Activated T-helper 1 cell treated with anti-CD3 and anti-CD28 coated beads, Interleukin-12 subunit alpha, Interleukin-12 subunit beta, Interleukin-2, Interleukin-4 antibody, amounts not matched to agents 30 ng/mL and 10 ng/mL and 1 ng/mL, durations not matched to agents 14 hours and 24 hours and 36 hours (primary cell): ENCODE measurements at regions of chr16 and their contacts with region 1.

Region 1: DNA sequence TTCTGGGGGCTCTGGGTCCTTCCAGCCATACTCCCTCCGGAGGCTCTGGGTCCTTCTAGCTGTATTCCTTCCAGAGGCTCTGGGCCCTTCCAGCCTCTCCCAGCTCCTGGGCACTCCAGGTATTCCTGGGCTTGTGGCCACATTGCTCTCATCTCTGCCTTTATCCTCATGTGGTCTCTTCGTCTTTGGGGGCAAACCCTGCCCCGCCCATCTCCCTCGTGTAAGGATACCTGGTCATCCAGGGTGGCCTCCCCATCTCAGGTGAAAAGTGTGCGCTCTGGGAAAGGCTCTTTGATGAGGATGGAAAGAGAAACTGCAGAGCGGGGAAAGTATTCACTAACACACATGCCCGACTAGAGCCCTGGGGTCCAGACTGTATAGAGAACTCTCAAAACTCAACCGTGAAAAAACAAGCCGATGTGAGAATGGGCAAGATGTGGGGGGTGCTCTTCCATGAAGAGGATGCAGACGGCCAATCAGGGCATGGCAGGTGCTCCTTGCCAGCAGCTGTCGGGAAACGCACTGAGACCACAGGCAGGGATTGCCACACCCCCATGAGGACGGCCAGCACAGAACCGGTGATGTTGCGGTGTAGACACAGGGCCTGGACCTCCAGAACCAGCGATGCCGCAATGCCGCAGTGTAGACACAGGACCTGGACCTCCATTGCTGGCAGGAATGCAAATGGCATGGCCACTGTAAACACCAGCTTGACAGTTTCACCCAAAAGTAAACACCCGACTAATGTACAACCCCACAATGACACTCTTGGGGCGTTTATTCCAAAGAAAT is 164.7 kb downstream of the BANP start:
- DNase-seq: no peak
- H3K4me3 Mint-ChIP-seq: no peak overlapping the region
- H3K27ac Mint-ChIP-seq: no peak overlapping the region
- H3K4me1 Mint-ChIP-seq: no peaks in the 10 kb centered on the region
- H3K27me3 Mint-ChIP-seq: peaks cover 4% of the 10 kb centered on the region

Region 2: GRCh38 chr16:88102597-88102996 is 13.3 kb before region 1 on chr16:
- intact Hi-C with region 1: loop called (anchors 1 kb)
- DNase-seq: no peak
- H3K4me3 Mint-ChIP-seq: no peak overlapping the region
- H3K27ac Mint-ChIP-seq: no peak overlapping the region
- H3K4me1 Mint-ChIP-seq: no peaks in the 10 kb centered on the region
- H3K27me3 Mint-ChIP-seq: peaks cover 8% of the 10 kb centered on the region

Region 3: DNA sequence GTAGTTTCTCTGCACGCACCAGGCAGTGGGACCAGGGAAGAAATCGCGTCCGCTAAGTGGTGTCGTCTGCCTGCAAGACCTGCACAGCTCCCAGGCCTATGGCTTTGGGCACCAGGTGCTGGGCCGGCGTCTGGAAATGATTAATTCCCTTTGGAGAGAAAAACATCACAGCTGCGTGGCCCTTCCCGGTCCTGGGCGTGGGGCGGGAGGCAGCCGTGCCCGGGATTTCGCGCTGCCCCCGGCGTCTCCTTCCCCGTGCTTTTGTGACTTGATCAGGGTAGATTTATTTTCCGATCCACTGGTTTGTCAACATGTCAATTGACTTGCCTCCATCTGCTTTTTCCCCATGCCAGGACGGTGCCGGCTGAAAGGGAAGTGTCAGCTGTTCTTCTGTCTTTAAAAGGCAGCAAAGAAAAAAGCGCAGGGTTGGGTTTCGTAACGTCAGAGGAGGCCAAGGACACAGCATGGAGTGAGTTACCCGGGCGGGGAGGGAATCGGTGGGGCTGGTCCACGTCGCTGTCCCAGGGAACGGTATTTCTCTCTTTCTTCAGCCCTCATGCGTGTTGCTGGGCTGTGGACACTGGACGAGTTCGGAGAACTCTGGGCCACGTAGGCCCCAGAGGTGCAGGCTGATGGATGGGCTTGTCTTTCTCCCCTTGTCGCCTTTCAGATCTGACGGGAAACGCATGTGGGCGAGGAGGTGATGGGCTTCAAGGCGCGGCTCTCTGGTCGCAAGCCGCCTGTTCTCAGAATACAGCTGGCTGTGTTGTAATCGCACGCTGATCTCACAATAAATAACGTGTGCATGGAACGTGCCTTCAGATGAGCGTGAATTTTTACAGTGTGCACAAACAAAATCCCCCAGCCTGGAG is 78.7 kb after region 1 on chr16:
- intact Hi-C with region 1: no loop called
- DNase-seq: no peak
- H3K4me3 Mint-ChIP-seq: no peak overlapping the region
- H3K27ac Mint-ChIP-seq: no peak overlapping the region
- H3K4me1 Mint-ChIP-seq: no peaks in the 10 kb centered on the region
- H3K27me3 Mint-ChIP-seq: no peaks in the 10 kb centered on the region

Region 4: GRCh38 chr16:88536971-88537751 is 421.2 kb after region 1 on chr16:
- intact Hi-C with region 1: no loop called
- DNase-seq: no peak
- H3K4me3 Mint-ChIP-seq: no peak overlapping the region
- H3K27ac Mint-ChIP-seq: no peak overlapping the region
- H3K4me1 Mint-ChIP-seq: no peaks in the 10 kb centered on the region
- H3K27me3 Mint-ChIP-seq: no peaks in the 10 kb centered on the region

Region 5: GRCh38 chr16:88569985-88570690 is 454.2 kb after region 1 on chr16 and contains the start of gene ZC3H18:
- intact Hi-C with region 1: no loop called
- DNase-seq: peak; percentile 96
- H3K4me3 Mint-ChIP-seq: peak within 1 kb of the TSS; percentile 92
- H3K27ac Mint-ChIP-seq: peak within 1 kb of the TSS; percentile 86
- H3K4me1 Mint-ChIP-seq: peaks cover 40% of the 10 kb centered on the region
- H3K27me3 Mint-ChIP-seq: no peaks in the 10 kb centered on the region
- total RNA-seq, gene ZC3H18: 115 and 116 TPM in 2 replicates